Activated CD4-positive, alpha-beta T cell treated with anti-CD3 and anti-CD28 coated beads for 36 hours (primary cell): ENCODE measurements at regions of chr2 and their contacts with region 1.

Region 1: DNA sequence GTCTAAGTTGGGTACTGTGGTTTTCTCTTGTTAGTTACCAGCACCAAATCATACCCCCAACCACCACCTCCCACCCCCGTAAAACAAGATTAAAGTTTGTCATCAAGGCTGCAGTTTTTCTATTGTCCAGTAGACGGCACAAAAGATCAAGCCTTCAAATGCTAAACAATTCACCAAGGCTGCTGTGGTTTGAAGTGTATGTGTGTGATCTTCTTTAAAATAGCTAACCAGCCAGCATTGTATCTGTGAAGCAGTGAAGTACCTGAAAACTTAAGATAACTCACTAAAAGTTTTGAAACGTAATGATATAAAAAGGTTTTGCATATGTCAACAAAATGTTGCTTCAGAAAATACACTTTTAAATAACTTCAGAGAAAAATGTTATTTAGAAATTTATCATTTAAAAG is 5.9 kb upstream of the MEIS1 start:
- DNase-seq: no peak
- ATAC-seq: no peak
- H3K4me3 Mint-ChIP-seq: no peak overlapping the region
- H3K27ac Mint-ChIP-seq: no peak overlapping the region
- H3K4me1 Mint-ChIP-seq: peaks cover 13% of the 10 kb centered on the region
- H3K27me3 Mint-ChIP-seq: peaks cover 73% of the 10 kb centered on the region

Region 2: DNA sequence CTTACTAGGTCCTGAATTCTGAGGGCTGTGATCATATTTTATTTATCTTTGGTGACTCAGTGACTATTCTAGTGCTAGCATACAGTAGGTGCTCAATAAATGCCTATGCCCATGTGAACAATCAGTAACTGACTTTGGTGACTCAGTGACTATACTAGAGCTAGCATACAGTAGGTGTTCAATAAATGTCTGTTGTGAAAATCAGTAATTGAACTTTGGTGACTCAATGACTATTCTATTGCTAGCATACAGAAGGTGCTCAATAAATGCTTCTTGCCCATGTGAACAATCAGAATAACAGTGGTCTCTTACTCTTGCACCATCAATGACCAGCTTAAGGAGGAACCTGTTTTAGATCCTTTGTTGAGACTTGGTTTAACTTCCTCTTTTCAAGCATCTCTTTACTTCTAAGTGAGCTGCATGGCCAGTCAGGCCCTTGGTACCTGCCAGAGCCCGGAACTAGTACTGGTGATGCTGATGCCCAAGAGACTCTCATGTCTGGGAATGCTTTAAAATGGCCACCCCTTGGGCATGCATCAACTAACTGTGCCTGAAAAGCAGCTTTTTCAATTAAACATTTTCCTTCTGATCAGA is 781.7 kb before region 1 on chr2:
- CTCF ChIA-PET with region 1: no interaction called
- POLR2A ChIA-PET with region 1: no interaction called
- intact Hi-C with region 1: loop called in 1 of 2 experiments (anchors 10 kb)
- DNase-seq: no peak
- ATAC-seq: no peak
- H3K4me3 Mint-ChIP-seq: no peak overlapping the region
- H3K27ac Mint-ChIP-seq: no peak overlapping the region
- H3K4me1 Mint-ChIP-seq: no peaks in the 10 kb centered on the region
- H3K27me3 Mint-ChIP-seq: no peaks in the 10 kb centered on the region

Region 3: DNA sequence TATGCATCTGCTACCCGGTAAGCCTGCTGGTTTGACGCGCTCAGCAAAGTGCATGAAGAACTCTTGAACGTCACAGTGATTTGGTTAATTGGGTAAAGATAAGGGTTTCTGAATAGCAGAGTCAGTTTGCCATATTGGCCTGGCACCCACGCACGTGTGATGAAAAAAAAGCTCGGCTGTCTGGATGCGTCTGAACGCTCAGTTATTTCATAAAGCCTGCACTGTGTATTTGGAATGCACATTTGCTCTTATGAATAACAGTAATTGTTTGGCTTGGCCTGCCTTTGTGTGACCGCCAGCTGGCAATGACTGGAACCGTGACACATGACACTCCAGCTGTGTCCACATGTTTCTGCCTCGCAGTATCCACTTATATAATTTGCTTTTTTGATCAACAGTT is 123.4 kb before region 1 on chr2:
- CTCF ChIA-PET with region 1: no interaction called
- POLR2A ChIA-PET with region 1: no interaction called
- intact Hi-C with region 1: no loop called
- DNase-seq: no peak
- ATAC-seq: no peak
- H3K4me3 Mint-ChIP-seq: no peak overlapping the region
- H3K27ac Mint-ChIP-seq: no peak overlapping the region
- H3K4me1 Mint-ChIP-seq: no peaks in the 10 kb centered on the region
- H3K27me3 Mint-ChIP-seq: peaks cover 2% of the 10 kb centered on the region

Region 4: DNA sequence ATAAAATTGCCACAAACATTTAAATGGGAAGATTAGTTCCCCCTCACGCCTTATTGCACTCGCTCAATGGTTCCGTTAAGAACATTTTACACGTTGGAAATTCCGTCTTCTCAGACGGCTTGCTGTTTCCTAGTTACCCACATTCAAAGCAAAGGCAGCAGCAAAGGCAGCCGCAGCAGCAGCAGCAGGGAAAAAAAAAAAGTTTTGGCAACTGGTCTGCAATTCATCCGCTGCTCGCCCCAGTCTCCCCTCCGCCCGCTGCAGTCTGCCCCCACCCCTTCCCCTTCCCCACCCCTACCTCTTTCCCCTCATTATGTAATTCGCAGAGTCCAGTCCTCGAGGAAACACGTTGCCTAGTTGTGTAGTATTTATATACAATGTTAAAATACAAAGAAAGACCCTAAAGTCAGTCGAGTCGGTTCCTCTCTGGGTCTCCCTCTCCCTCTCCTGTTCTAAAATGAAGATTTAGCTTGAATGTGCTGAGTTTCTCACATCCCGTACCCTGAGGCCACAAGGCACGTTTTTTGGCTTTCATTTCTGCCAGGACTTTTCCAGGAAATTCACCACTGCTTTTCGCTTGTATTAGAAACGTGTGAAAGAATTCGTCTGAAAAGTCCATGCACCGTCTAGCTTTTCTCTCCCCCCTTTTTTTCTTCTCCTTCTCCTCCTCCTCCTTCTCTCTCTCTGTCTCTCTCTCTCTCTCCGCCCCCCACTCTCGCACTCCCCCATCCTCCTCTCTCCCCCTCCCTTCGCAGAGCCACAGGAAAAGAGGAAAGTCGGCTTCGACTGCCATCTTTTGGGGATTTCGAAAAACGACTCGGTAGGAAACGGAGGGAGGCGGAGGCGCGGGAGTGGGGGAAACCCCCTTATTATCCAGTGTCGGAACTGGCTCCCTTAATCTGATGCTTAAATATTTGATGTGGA is 145.9 kb after region 1 on chr2:
- CTCF ChIA-PET with region 1: no interaction called
- POLR2A ChIA-PET with region 1: no interaction called
- intact Hi-C with region 1: loop called in 1 of 2 experiments (anchors 2 kb)
- DNase-seq: peak; percentile 34
- ATAC-seq: no peak
- H3K4me3 Mint-ChIP-seq: no peak overlapping the region
- H3K27ac Mint-ChIP-seq: no peak overlapping the region
- H3K4me1 Mint-ChIP-seq: peaks cover 6% of the 10 kb centered on the region
- H3K27me3 Mint-ChIP-seq: peaks cover 49% of the 10 kb centered on the region

Region 5: DNA sequence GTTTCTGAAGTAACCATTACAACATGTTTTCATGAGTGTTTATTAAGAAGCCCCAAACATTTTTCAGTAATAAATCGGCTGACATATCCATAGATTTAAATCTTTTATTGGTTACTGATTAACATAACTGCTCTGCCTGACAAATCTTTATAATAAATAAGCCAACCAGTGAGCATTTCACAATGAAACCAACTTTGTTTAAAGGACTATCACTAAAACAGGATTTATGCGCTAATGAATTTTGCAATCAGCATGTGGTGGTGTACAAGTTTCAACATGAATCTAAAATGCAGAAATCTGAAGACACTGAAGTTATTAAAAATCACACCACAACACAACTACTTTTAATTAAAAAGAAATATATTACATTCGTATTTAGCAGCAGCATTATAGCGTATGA is 172.6 kb after region 1 on chr2:
- CTCF ChIA-PET with region 1: no interaction called
- POLR2A ChIA-PET with region 1: no interaction called
- intact Hi-C with region 1: no loop called
- DNase-seq: no peak
- ATAC-seq: no peak
- H3K4me3 Mint-ChIP-seq: no peak overlapping the region
- H3K27ac Mint-ChIP-seq: no peak overlapping the region
- H3K4me1 Mint-ChIP-seq: no peaks in the 10 kb centered on the region
- H3K27me3 Mint-ChIP-seq: peaks cover 2% of the 10 kb centered on the region

Region 6: DNA sequence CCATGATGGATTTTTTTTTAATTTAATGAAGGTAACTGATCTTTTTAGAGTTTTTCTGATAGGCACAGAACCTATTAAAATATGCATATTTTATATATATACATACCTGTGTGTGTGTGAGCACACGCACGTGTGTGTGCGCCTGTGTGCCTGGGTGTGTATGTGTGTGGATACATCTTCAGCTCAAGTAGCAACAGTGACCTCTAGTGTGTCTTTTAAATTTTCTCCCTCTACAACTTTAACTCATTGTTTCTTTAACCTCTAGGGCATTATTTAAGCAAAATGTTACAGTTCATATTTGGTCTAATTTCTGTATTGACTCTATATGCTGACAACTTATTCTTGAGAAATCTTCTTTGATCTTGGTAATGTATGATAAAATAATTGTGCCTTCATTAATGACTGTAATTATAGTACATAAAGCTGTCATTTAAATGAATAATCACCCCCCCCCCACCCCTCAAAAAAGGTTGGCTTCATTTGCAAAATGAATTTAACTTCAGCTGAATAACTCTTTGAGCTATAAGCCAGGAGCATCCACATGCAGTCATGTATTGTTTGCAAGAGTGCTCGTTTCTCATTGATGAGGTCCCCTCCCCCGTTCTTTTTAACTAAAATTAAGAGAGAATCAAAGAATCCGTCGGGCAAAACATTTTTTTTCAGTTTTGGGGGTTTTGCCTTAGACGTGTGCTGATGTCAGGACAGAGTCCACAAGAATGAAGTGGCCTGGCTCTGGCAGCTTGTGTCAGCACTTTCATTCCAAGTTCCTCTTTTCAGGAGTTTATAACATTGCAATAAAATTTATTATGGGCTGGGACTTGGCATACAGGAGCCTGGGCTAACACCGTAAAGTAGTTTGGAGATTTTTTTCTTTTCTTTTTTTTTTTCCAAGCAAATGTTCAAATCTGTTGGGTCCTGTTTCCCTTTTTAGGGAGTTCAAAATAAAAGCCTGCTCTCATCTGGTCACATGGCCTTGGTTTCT is 1048.0 kb after region 1 on chr2:
- CTCF ChIA-PET with region 1: no interaction called
- POLR2A ChIA-PET with region 1: no interaction called
- intact Hi-C with region 1: loop called in 1 of 2 experiments (anchors 5 kb)
- DNase-seq: no peak
- ATAC-seq: no peak
- H3K4me3 Mint-ChIP-seq: no peak overlapping the region
- H3K27ac Mint-ChIP-seq: no peak overlapping the region
- H3K4me1 Mint-ChIP-seq: no peaks in the 10 kb centered on the region
- H3K27me3 Mint-ChIP-seq: peaks cover 14% of the 10 kb centered on the region

Region 7: GRCh38 chr2:67840460-67841068 is 1411.5 kb after region 1 on chr2:
- CTCF ChIA-PET with region 1: no interaction called
- POLR2A ChIA-PET with region 1: no interaction called
- intact Hi-C with region 1: loop called in 1 of 2 experiments (anchors 10 kb)
- DNase-seq: peak; percentile 65
- ATAC-seq: no peak
- H3K4me3 Mint-ChIP-seq: no peak overlapping the region
- H3K27ac Mint-ChIP-seq: no peak overlapping the region
- H3K4me1 Mint-ChIP-seq: no peaks in the 10 kb centered on the region
- H3K27me3 Mint-ChIP-seq: peaks cover 7% of the 10 kb centered on the region

Region 8: GRCh38 chr2:68031542-68032160 is 1602.6 kb after region 1 on chr2:
- CTCF ChIA-PET with region 1: interaction called, 3 read pairs
- POLR2A ChIA-PET with region 1: no interaction called
- intact Hi-C with region 1: loop called in 1 of 2 experiments (anchors 1 kb)
- DNase-seq: no peak
- ATAC-seq: no peak
- H3K4me3 Mint-ChIP-seq: no peak overlapping the region
- H3K27ac Mint-ChIP-seq: no peak overlapping the region
- H3K4me1 Mint-ChIP-seq: no peaks in the 10 kb centered on the region
- H3K27me3 Mint-ChIP-seq: no peaks in the 10 kb centered on the region